GM10248 (cell line): ENCODE measurements at regions of chr16 and their contacts with region 1.

Region 1: GRCh38 chr16:80526425-80527061 is 14.2 kb upstream of the DYNLRB2 start:
- DNase-seq: peak; percentile 46
- CTCF ChIP-seq: peak; percentile 88

Region 2: GRCh38 chr16:80547145-80547544 is 20.6 kb after region 1 on chr16:
- CTCF ChIA-PET with region 1: interaction called, 19 read pairs
- POLR2A ChIA-PET with region 1: no interaction called
- DNase-seq: no peak
- CTCF ChIP-seq: no peak

Region 3: GRCh38 chr16:80580109-80580832 is 53.7 kb after region 1 on chr16:
- CTCF ChIA-PET with region 1: interaction called, 32 read pairs
- POLR2A ChIA-PET with region 1: no interaction called
- DNase-seq: peak; percentile 69
- CTCF ChIP-seq: peak; percentile 22

Region 4: DNA sequence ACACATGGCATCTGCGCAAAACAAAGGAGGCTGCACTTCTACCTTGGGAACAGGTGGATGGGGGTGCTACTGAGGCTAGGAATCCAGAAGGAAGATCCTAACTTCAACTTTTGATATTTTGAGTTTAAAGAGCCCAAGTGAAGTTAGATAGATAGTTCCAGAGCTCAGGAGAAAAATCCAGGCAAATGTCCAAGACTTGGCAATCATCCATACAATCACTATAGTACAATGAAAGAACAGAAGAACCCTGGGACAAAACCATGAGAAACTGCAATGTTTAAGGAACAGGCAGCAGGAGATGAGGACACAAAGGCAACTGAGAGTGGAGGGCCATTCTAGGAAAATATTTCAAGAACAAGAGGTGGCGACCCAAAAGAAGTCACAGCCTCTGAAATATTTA is 265.5 kb after region 1 on chr16:
- CTCF ChIA-PET with region 1: interaction called, 13 read pairs
- POLR2A ChIA-PET with region 1: no interaction called
- DNase-seq: no peak
- CTCF ChIP-seq: no peak

Region 5: DNA sequence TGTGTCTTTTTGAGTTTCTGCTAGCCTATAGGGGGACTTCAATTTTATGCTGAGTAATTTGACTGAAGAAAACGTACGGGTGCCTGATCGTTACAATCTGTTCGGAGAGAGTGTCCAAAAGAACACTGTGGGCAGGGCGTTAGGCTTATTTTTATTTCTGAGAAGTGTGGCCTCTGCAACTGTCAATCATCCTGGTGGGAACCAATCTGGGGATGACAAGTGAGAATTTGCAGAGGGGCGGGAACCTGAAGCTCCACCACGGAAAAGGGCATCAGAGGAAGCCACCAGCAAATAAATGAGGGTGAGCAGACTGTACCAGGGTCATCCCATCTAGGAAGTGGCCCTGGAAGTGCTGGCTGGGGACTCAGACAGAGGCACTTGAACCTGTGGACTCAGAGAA is 289.8 kb after region 1 on chr16:
- CTCF ChIA-PET with region 1: interaction called, 28 read pairs
- POLR2A ChIA-PET with region 1: no interaction called
- DNase-seq: no peak
- CTCF ChIP-seq: no peak

Region 6: DNA sequence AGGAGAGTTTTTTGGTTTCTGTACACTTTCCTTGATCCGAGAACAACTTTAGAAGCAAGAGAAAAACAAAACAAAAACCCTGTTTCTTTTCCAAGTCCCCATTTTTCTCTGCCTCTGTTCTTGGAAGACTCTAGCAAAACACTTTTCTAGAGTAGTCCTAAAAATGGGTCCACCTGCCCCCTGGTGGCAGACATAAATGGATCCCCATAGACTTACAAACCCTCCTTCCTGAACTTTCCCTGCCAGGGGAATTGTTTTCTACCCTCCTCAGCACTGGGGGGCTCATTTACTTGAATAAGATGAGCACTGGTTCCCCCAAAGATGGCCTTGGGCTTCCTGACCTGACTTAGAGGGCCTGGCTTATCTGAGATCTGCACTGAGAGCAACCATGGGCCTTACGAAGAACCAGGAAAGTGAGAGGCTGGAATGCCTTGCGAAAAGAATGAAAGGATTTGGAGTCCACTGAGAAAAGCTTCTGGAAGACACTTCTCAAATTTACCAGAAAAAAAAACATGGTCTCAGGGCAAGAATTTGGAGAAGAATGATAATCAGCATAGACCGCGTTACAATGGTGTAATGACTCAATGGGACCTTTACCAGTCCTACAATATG is 325.8 kb after region 1 on chr16:
- CTCF ChIA-PET with region 1: interaction called, 52 read pairs
- POLR2A ChIA-PET with region 1: no interaction called
- DNase-seq: peak; percentile 20
- CTCF ChIP-seq: peak; percentile 51

Region 7: GRCh38 chr16:80948886-80949493 is 422.4 kb after region 1 on chr16:
- CTCF ChIA-PET with region 1: interaction called, 11 read pairs
- POLR2A ChIA-PET with region 1: no interaction called
- DNase-seq: peak; percentile 53
- CTCF ChIP-seq: peak; percentile 73